Activated CD4-positive, alpha-beta memory T cell treated with anti-CD3 and anti-CD28 coated beads, Interleukin-2, amount 10 ng/mL, durations not matched to agents 7 days and 5 days (primary cell): ENCODE measurements at regions of chr19 and their contacts with region 1.

Region 1: GRCh38 chr19:36114763-36115452 is at the start of gene POLR2I:
- DNase-seq: peak; percentile 99
- H3K4me3 Mint-ChIP-seq: peak within 1 kb of the TSS; percentile 92
- H3K27ac Mint-ChIP-seq: peak within 1 kb of the TSS; percentile 95
- H3K4me1 Mint-ChIP-seq: peaks cover 47% of the 10 kb centered on the region
- H3K27me3 Mint-ChIP-seq: no peaks in the 10 kb centered on the region
- total RNA-seq, gene POLR2I: 47.3 to 57.4 TPM

Region 2: DNA sequence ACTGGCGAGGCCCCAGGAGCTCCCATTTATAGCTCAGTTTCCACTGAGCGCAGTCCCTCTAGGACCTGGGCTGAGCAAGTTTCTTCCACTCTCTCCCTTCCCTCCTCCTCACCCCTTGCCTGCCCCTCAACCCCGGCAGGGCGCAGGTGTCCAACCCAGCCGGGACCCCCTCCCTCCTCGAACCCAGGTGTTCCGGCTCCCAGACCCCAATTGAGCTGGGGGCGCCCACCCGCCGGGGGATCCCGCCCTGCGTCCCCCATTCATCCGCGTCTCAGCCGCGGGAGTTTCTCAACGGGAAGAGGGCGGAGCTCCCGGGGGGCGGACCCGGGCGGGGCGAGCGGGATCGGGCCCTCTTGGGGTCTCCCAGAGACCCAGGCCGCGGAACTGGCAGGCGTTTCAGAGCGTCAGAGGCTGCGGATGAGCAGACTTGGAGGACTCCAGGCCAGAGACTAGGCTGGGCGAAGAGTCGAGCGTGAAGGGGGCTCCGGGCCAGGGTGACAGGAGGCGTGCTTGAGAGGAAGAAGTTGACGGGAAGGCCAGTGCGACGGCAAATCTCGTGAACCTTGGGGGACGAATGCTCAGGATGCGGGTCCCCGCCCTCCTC is 258.3 kb before region 1 on chr19 and contains the start of gene KIRREL2:
- CTCF ChIA-PET with region 1: no interaction called
- POLR2A ChIA-PET with region 1: no interaction called
- DNase-seq: peak; percentile 38
- H3K4me3 Mint-ChIP-seq: peak within 1 kb of the TSS; percentile 67
- H3K27ac Mint-ChIP-seq: no peak within 1 kb of the TSS
- H3K4me1 Mint-ChIP-seq: peaks cover 5% of the 10 kb centered on the region
- H3K27me3 Mint-ChIP-seq: peaks cover 68% of the 10 kb centered on the region
- total RNA-seq, gene KIRREL2: 0.55 to 0.58 TPM

Region 3: DNA sequence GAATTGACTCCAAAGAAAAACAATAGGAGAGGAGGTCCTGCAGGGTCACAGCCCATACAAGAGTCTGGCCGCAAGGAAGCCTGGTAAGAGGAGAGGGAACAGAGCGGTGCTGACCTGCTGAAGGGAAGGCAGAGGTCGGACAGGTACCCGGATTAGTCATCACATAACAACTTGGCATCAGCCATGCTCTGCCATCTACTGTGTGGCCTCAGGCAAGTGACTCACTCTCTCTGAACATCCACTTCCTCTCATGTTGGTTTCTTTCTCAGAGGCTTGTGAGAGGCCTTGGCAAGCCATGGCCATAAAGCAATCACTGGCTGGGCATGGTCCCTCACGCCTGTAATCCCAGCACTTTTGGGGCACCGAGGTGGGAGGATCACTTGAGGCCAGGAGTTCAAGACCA is 17.6 kb after region 1 on chr19:
- CTCF ChIA-PET with region 1: interaction called, 23 read pairs
- POLR2A ChIA-PET with region 1: interaction called, 37 read pairs
- DNase-seq: peak; percentile 72
- H3K4me3 Mint-ChIP-seq: peak overlapping the region; percentile 30
- H3K27ac Mint-ChIP-seq: peak overlapping the region; percentile 87
- H3K4me1 Mint-ChIP-seq: peaks cover 65% of the 10 kb centered on the region
- H3K27me3 Mint-ChIP-seq: no peaks in the 10 kb centered on the region

Region 4: DNA sequence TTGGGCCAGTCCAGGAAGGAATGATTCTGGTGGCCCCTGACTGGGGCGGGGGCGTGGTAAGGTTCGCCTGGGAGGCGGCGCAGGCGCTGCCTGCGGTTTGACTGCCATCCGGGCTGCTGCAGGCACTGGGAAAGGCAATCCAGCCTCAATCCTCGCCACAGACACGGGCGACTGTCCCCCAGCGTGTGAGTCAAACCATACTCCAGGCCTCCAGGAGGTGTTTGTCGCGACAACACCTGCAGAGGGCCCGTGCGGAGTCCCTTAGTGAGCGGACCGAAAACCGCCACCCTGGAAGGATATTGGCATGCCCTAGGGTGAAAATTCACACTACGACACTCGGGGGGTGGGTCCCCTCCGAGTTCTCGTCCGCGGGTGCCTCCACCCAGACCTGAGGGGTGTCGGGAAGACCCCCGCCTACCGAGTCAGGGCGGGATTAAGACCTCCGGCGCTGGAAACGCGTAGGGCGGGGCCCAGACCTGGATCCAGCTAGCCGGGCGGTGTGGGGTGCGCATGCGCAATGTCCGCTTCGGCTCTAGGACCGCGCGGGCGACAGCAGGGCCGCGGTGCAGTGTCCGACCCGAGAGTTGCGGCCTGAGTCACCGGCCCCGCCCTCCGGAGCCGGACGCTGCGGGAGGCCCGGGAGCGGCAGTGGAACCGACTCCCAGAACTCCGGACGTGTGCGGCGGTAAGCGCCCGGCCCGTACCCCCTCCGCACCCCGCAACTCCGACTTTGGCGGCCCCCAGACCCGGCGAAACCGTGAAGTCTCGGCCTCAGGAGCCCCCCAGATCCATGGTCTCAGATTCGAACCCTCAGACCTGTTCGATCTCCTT is 24.8 kb after region 1 on chr19 and contains the start of gene CAPNS1:
- CTCF ChIA-PET with region 1: no interaction called
- POLR2A ChIA-PET with region 1: interaction called, 23 read pairs
- DNase-seq: peak; percentile 94
- H3K4me3 Mint-ChIP-seq: peak within 1 kb of the TSS; percentile 92
- H3K27ac Mint-ChIP-seq: peak within 1 kb of the TSS; percentile 98
- H3K4me1 Mint-ChIP-seq: peaks cover 50% of the 10 kb centered on the region
- H3K27me3 Mint-ChIP-seq: no peaks in the 10 kb centered on the region
- total RNA-seq, gene CAPNS1: 520 to 539 TPM

Region 5: DNA sequence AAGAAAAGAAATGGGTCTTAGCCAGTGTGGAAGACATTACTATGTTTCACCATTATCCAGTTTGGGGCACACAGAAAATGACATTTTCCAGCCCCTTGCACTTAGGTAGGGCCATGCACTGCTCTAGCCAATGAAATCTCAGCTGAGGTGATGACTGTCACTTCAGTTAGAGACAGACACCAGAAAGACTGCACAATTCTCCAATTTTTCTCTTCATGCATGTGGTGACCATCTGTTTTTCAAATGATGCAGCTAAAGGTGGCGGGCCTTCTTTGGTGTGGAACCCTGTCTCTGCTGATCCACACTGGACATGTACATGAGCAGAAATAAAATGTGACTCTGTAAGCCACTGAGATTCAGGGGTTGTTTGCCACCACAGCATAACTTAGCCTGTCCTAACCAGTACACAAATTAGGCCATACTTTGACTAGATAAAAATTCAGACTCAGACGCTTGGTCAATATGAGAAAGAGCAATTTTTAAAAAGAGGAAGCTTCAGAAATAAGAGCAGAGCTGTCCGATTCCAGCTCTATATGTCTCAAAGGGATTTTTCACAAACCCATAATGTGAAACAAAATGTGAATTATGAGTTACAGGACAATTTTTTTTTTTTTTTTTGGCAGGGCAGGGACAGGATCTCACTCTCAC is 92.8 kb after region 1 on chr19:
- CTCF ChIA-PET with region 1: no interaction called
- POLR2A ChIA-PET with region 1: no interaction called
- DNase-seq: no peak
- H3K4me3 Mint-ChIP-seq: no peak overlapping the region
- H3K27ac Mint-ChIP-seq: no peak overlapping the region
- H3K4me1 Mint-ChIP-seq: no peaks in the 10 kb centered on the region
- H3K27me3 Mint-ChIP-seq: no peaks in the 10 kb centered on the region